Activated CD4-positive, alpha-beta memory T cell treated with anti-CD3 and anti-CD28 coated beads for 36 hours (primary cell): ENCODE measurements at regions of chr2 and their contacts with region 1.

Region 1: GRCh38 chr2:224927646-224928173 is 114.6 kb downstream of the DOCK10 start:
- DNase-seq: peak; percentile 83
- H3K4me3 Mint-ChIP-seq: peak overlapping the region; percentile 66
- H3K27ac Mint-ChIP-seq: peak overlapping the region; percentile 96
- H3K4me1 Mint-ChIP-seq: peaks cover 97% of the 10 kb centered on the region
- H3K27me3 Mint-ChIP-seq: no peaks in the 10 kb centered on the region

Region 2: DNA sequence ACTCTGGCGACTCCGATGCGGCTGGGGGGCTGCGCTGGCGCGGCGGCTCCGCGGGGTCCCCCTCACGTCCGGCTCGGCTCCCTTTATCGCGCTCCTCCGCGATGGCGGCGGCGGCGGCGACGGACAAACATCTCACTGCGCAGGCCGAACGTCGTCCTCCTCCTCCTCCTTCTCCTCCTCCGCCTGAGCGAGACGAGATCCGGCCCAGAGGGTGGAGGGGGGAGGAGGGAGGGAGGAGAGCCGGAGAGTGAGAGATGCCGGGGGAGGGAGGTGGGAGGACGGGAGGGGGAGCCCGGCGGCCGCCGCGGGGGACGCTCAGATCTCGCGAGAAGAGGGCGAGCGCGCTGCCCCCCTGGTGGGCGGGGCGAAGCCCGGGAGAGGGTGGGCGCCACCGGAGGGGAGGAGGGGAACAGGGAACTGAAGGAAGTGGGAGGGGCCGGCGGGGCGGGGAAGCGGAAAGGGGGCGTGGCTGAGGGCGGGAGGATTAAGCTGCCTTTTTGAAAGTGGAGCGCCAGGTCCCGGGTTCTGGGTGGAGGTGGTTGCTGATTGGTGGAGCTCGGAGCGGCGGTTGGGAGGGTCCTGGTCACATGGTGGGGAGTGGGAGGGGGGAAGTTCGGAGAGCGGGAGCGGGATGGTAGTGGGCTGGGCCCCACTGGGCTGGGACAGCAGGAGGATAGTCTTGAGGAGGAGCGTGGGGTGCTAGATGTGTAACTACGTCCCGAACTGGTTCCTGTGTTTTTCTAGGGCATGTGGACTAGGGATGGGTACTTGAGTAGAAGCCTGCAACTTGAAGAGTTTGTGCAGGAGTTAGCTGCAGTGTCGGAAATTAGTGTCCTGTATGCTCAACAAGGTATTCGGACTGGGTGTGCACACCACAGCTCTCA is 342.3 kb before region 1 on chr2 and contains the start of gene CUL3:
- CTCF ChIA-PET with region 1: no interaction called
- POLR2A ChIA-PET with region 1: no interaction called
- intact Hi-C with region 1: loop called (anchors 5 kb)
- DNase-seq: peak; percentile 100
- H3K4me3 Mint-ChIP-seq: peak within 1 kb of the TSS; percentile 97
- H3K27ac Mint-ChIP-seq: peak within 1 kb of the TSS; percentile 92
- H3K4me1 Mint-ChIP-seq: peaks cover 31% of the 10 kb centered on the region
- H3K27me3 Mint-ChIP-seq: no peaks in the 10 kb centered on the region
- total RNA-seq, gene CUL3: 75.8 to 79.5 TPM

Region 3: GRCh38 chr2:224802407-224802806 is 125.3 kb before region 1 on chr2:
- CTCF ChIA-PET with region 1: no interaction called
- POLR2A ChIA-PET with region 1: no interaction called
- intact Hi-C with region 1: no loop called
- DNase-seq: no peak
- H3K4me3 Mint-ChIP-seq: no peak overlapping the region
- H3K27ac Mint-ChIP-seq: peak overlapping the region; percentile 18
- H3K4me1 Mint-ChIP-seq: no peaks in the 10 kb centered on the region
- H3K27me3 Mint-ChIP-seq: no peaks in the 10 kb centered on the region

Region 4: DNA sequence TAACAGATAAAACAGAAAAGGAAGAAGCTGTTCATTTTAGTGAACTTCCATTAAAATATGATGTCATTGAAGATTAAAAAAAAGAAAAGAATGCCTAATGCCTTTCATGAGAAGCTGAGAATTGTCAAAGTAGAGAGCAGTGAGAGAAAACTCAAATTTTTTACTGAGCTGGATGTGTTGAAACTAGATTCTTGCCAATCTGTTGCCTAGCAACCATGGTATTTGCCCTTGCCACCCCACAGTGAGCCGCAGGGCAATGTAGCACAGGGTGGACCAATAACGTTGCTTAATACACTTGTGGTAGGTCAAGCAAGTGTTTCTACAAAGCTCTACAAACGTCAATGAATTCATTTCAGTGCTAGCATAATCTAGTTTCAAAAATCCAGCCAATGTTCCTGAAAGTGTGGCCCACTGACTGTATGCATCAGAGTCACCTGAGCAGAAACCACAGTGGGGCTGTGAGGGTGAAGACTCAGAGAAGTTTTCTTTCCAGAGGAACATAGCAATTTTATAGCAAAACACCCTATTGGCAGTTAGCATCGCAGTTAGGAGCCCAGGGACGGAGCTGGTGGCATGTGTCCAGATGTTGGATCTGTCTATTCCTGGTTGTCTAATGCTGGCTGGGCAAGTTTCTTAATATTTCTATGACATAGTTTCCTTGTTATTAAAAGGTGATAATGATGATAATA is 17.7 kb before region 1 on chr2:
- CTCF ChIA-PET with region 1: interaction called, 3 read pairs
- POLR2A ChIA-PET with region 1: interaction called, 5 read pairs
- intact Hi-C with region 1: loop called (anchors 1 kb)
- DNase-seq: peak; percentile 47
- H3K4me3 Mint-ChIP-seq: no peak overlapping the region
- H3K27ac Mint-ChIP-seq: peak overlapping the region; percentile 69
- H3K4me1 Mint-ChIP-seq: peaks cover 47% of the 10 kb centered on the region
- H3K27me3 Mint-ChIP-seq: no peaks in the 10 kb centered on the region

Region 5: DNA sequence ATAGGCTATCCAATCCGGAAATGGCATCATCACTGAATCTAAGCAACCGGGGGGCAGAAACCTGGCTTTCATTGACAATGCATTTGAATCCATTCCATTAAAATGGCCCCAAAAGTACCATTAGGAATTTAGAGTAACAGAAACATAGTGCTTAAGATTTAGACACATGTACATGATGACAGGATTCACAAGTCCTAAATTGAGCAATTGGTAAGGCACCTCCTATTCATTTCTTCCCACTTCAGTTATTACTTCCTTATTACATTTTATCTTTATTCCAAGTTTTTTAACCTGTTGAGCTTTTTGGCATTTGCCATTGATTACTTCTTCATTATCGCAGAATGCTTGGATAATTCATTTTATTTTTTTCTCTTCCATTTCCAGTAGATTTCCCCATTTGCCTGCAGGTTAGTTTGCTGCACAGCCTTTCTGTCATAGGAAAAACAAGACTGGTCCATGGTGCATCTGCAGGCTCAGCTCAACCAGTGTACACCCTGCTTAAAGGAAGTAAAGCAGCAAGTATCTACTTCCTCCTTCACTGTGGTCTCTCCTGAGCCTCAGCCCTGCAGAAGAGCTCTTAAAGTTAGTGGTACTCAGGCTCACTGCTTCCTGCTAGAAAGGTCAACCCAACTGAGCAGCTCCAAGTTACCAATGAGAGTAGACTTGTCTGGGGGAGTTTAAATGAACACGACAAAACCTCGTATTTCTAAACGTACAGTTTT is 25.4 kb after region 1 on chr2:
- CTCF ChIA-PET with region 1: interaction called, 16 read pairs
- POLR2A ChIA-PET with region 1: interaction called, 209 read pairs
- intact Hi-C with region 1: loop called (anchors 1 kb)
- DNase-seq: peak; percentile 51
- H3K4me3 Mint-ChIP-seq: peak overlapping the region; percentile 24
- H3K27ac Mint-ChIP-seq: peak overlapping the region; percentile 87
- H3K4me1 Mint-ChIP-seq: peaks cover 87% of the 10 kb centered on the region
- H3K27me3 Mint-ChIP-seq: no peaks in the 10 kb centered on the region

Region 6: GRCh38 chr2:225002039-225002655 is 74.4 kb after region 1 on chr2:
- CTCF ChIA-PET with region 1: interaction called, 43 read pairs
- POLR2A ChIA-PET with region 1: interaction called, 4 read pairs
- intact Hi-C with region 1: loop called (anchors 1 kb)
- DNase-seq: peak; percentile 65
- H3K4me3 Mint-ChIP-seq: no peak overlapping the region
- H3K27ac Mint-ChIP-seq: peak overlapping the region; percentile 74
- H3K4me1 Mint-ChIP-seq: peaks cover 82% of the 10 kb centered on the region
- H3K27me3 Mint-ChIP-seq: no peaks in the 10 kb centered on the region

Region 7: DNA sequence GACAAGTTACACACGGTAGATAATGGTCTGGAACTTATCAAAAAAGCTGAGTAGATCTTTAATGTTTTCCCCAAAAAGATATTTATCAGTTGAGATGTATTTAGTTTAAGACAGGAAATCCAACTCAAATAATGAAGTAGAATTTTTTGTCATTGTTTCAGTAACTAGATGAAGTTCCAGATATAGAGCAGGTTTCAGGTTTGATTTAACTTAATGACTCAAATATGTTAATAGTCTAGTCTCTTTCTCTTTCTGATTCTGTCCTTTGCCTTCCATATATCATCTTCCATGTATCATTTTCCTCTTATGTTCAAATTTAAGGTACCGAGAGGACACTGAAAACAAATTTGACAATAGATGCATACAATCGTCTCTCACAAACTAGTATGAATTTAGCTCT is 138.2 kb after region 1 on chr2:
- CTCF ChIA-PET with region 1: interaction called, 3 read pairs
- POLR2A ChIA-PET with region 1: no interaction called
- intact Hi-C with region 1: loop called (anchors 1 kb)
- DNase-seq: no peak
- H3K4me3 Mint-ChIP-seq: no peak overlapping the region
- H3K27ac Mint-ChIP-seq: no peak overlapping the region
- H3K4me1 Mint-ChIP-seq: peaks cover 40% of the 10 kb centered on the region
- H3K27me3 Mint-ChIP-seq: no peaks in the 10 kb centered on the region

Region 8: GRCh38 chr2:225293638-225294037 is 365.9 kb after region 1 on chr2:
- CTCF ChIA-PET with region 1: no interaction called
- POLR2A ChIA-PET with region 1: no interaction called
- intact Hi-C with region 1: no loop called
- DNase-seq: no peak
- H3K4me3 Mint-ChIP-seq: no peak overlapping the region
- H3K27ac Mint-ChIP-seq: no peak overlapping the region
- H3K4me1 Mint-ChIP-seq: no peaks in the 10 kb centered on the region
- H3K27me3 Mint-ChIP-seq: peaks cover under 1% of the 10 kb centered on the region